ENCODE measurements at regions of chr12 and their contacts with region 1.

Region 1: DNA sequence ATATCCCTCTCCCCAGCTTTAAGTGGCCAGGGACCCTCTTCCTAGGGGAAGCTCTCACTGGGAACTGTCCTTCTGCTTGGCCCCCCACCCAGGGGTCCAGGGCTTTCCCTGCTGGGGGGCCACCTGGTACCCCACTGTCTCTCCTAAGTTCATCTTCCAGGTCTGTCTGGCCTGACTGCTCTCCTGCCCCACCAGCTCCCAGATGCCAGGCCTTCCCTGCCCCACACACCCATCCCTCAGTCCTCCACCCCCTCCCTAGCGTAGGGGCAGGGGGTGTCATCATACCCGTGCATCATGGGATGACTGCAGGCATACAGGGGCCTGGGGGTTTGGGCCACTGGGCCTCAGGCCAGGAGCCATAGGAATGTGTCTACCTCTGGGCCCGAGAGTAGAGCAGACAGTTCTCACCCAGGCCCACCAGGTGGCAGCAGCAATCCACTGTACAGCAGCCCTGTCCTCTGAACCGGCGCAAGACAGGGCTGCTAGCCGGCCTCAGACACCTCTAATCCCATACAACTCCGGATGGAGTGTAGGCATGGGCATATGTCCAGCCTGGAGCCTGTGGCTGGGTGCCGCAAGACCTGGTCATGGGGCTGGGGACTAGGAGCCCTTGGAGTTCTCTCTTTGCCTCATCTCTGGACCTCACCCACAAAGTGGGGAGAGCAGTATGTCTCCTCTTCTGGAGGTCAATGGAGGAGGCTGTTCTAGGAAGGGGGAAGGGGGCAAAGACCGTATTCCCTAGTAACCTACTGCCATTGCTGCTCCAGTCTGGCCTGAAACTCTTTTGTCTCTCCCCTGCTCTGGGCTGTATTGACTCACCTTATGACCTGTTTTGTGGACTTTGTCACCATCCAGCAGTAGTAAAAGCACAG is 10.0 kb upstream of the SMARCD1 start:
- DNase-seq: peak; percentile 71 to 84
- H3K4me3 ChIP-seq: no peak overlapping the region
- H3K27ac ChIP-seq: no peak overlapping the region
- H3K4me1 ChIP-seq: no peaks in the 10 kb centered on the region
- H3K27me3 ChIP-seq: no peaks in the 10 kb centered on the region
- CTCF ChIP-seq: peak; percentile 91

Region 2: DNA sequence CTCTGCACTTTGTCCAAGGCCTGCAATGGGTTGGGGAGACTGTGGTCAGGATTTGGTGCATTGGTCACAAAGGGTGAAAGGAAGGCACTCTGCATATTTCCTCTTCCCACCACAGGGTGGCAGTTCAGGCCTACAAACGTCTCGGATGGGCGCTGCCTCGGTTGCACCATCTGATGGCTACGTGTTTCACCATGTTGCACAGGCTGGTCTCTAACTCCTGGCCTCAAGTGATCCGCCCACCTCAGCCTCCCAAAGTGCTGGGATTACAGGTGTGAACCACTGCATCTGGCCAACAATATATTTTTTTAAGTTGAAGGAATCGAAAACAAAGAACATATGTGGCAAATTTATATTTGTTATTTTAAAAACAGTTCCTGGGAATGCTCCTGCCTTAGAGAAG is 298.8 kb before region 1 on chr12:
- CTCF ChIA-PET with region 1: no interaction called
- POLR2A ChIA-PET with region 1: no interaction called
- intact Hi-C with region 1: loop called (anchors 1 kb)
- DNase-seq: peak; percentile 51 to 54
- H3K4me3 ChIP-seq: no peak overlapping the region
- H3K27ac ChIP-seq: no peak overlapping the region
- H3K4me1 ChIP-seq: no peaks in the 10 kb centered on the region
- H3K27me3 ChIP-seq: no peaks in the 10 kb centered on the region
- CTCF ChIP-seq: peak; percentile 88

Region 3: GRCh38 chr12:49866859-49867579 is 208.2 kb before region 1 on chr12:
- CTCF ChIA-PET with region 1: interaction called, 5 read pairs
- POLR2A ChIA-PET with region 1: no interaction called
- intact Hi-C with region 1: loop called (anchors 1 kb)
- DNase-seq: peak; percentile 67 to 82
- H3K4me3 ChIP-seq: no peak overlapping the region
- H3K27ac ChIP-seq: peak overlapping the region; percentile 57; the same call in 1 of the 2 replicates
- H3K4me1 ChIP-seq: peaks cover 30% of the 10 kb centered on the region
- H3K27me3 ChIP-seq: no peaks in the 10 kb centered on the region
- CTCF ChIP-seq: peak; percentile 98

Region 4: DNA sequence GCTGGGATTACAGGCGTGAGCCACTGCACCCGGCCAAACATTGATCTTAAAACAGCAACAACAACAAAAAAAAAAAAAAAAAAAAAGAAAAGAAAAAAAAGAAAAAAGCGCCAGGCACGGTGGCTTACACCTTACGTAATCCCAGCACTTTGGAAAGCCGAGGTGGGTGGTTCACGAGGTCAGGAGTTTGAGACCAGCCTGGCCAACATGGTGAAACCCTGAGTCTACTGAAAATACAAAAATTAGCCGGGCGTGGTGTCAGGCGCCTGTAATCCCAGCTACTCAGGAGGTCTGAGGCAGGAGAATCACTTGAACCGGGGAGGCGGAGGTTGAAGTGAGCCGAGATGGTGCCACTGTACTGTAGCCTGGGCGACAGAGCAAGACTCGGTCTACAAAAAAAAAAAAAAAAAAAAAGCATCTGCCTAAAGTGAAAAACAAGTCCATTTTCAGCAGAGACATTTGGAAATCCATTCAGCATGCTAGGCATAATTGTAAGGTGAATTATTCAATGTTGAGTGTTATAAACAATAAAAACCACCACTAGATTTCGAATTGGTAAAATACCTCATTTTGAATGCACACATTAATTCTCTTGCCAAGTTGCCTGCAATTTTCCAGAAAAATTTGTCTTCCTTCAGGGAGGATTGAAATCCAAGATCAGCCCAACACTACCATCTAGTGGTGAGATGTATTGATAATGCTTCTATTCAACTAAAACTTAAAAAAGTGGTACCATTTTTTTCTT is 100.0 kb after region 1 on chr12:
- CTCF ChIA-PET with region 1: interaction called, 10 read pairs
- POLR2A ChIA-PET with region 1: no interaction called
- intact Hi-C with region 1: loop called (anchors 1 kb)
- DNase-seq: peak in 1 of 2 experiments; percentile 51
- H3K4me3 ChIP-seq: no peak overlapping the region
- H3K27ac ChIP-seq: no peak overlapping the region
- H3K4me1 ChIP-seq: no peaks in the 10 kb centered on the region
- H3K27me3 ChIP-seq: no peaks in the 10 kb centered on the region
- CTCF ChIP-seq: peak; percentile 78

Region 5: DNA sequence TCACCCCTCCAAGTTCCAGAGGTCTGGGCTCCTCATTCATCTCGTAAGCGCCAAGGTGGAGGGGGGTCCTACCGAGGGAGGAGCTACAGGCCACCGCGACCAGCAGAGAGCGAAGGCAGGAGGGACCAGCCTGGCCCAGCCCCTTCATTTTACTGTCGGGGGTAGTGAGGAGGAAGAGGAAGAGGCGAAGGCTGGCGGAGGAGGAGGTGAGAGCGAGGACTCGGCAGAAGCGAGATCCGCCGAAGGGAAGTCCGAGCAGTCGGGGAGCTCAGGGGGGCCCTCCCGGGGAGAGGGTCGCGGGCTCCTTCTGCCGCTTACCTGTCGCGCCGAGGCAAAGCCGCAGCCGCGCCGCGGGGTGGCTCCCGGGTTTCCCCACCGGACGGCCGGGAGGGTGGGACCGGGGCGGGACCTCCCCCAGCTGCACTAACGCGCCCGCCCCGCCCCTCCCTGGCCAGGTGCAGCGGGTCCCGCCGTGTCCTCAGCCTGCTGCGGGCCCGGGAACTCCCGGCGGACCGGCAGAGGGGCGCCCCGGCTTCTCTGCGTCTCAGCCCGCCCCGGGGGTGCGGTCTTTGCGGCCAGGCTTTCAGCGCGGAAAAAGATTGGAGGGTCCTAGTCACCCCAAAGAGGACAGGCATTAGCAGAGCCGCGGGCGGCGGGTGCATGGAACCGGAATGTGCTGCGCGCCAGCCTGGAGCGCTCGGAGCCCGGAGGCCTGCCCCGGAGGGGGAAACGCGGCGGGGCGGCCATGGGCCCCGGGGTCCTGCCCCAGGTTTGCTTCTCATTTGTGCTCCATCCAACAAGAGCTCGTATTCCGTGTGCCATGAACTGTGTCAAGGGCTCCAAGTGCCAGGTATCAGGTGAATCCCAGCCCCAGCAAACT is 1316.4 kb after region 1 on chr12 and contains the start of gene GALNT6:
- CTCF ChIA-PET with region 1: interaction called, 10 read pairs
- POLR2A ChIA-PET with region 1: no interaction called
- intact Hi-C with region 1: no loop called
- DNase-seq: peak; percentile 55 to 85
- H3K4me3 ChIP-seq: peak within 1 kb of the TSS; percentile 91
- H3K27ac ChIP-seq: peak within 1 kb of the TSS; percentile 36
- H3K4me1 ChIP-seq: peaks cover 59% of the 10 kb centered on the region
- H3K27me3 ChIP-seq: no peaks in the 10 kb centered on the region
- CTCF ChIP-seq: no peak
- total RNA-seq, gene GALNT6: 73.0 and 83.5 TPM in 2 replicates

Measured in PC-9 (cell line).